Activated CD4-positive, alpha-beta memory T cell treated with anti-CD3 and anti-CD28 coated beads for 36 hours (primary cell): ENCODE measurements at regions of chr9 and their contacts with region 1.

Region 1: GRCh38 chr9:137223078-137223970 is 1.3 kb upstream of the RNF208 start:
- DNase-seq: peak; percentile 99
- H3K4me3 Mint-ChIP-seq: peak overlapping the region; percentile 73
- H3K27ac Mint-ChIP-seq: peak overlapping the region; percentile 58
- H3K4me1 Mint-ChIP-seq: peaks cover 5% of the 10 kb centered on the region
- H3K27me3 Mint-ChIP-seq: peaks cover 2% of the 10 kb centered on the region

Region 2: GRCh38 chr9:137095664-137096517 is 127.4 kb before region 1 on chr9:
- CTCF ChIA-PET with region 1: interaction called, 17 read pairs
- POLR2A ChIA-PET with region 1: interaction called, 6 read pairs
- intact Hi-C with region 1: no loop called
- DNase-seq: peak; percentile 93
- H3K4me3 Mint-ChIP-seq: peak overlapping the region; percentile 62
- H3K27ac Mint-ChIP-seq: peak overlapping the region; percentile 84
- H3K4me1 Mint-ChIP-seq: peaks cover 19% of the 10 kb centered on the region
- H3K27me3 Mint-ChIP-seq: no peaks in the 10 kb centered on the region

Region 3: GRCh38 chr9:137129456-137130175 is 93.7 kb before region 1 on chr9:
- CTCF ChIA-PET with region 1: interaction called, 6 read pairs
- POLR2A ChIA-PET with region 1: interaction called, 14 read pairs
- intact Hi-C with region 1: loop called (anchors 2 kb)
- DNase-seq: peak; percentile 94
- H3K4me3 Mint-ChIP-seq: peak overlapping the region; percentile 84
- H3K27ac Mint-ChIP-seq: peak overlapping the region; percentile 70
- H3K4me1 Mint-ChIP-seq: peaks cover 20% of the 10 kb centered on the region
- H3K27me3 Mint-ChIP-seq: peaks cover 2% of the 10 kb centered on the region

Region 4: DNA sequence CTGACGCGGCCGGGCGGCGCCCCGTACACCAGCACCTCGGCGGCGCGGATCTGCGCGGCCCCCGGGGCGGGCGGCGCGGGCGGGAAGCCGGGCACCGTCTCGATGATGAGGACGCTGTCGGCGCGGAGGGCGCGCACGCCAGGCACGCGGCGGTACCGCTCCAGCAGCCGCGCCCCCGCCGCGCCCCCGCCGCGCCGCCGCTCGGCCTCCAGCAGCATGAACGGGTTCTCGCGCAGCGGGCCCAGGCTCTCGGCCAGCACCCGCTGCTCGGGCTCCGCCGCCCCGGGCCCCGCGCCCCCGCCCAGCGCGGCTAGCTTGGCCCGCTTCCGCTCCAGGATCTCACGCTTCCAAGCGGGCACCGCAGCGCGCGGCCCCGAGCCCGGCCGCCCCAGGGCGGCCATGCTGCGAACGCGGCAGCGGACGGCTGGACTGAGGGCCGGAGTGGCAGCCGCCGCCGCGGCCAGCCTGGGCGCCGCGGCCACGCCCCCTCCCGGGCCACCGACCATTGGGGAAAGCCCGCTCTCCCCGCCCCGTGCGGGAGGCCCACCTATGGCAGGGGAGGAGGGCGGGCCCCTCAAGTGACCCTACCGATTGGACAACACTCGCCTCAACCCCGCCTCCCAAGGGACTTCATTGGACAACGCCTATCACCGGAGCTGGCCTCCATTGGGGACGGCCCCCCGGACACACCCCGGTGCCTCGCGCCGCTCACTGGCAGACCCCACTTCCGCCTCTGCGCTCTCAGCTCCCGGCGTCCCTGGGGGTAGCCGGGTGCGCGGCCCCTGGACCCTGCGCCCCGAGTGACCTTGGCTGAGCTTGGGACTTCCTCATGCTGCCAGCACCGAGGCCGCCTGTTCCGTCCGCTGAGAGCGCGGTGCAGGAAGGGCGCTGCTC is 22.8 kb before region 1 on chr9 and contains the start of gene TPRN:
- CTCF ChIA-PET with region 1: interaction called, 9 read pairs
- POLR2A ChIA-PET with region 1: interaction called, 6 read pairs
- intact Hi-C with region 1: loop called (anchors 1 kb)
- DNase-seq: peak; percentile 99
- H3K4me3 Mint-ChIP-seq: peak within 1 kb of the TSS; percentile 82
- H3K27ac Mint-ChIP-seq: peak within 1 kb of the TSS; percentile 67
- H3K4me1 Mint-ChIP-seq: peaks cover 26% of the 10 kb centered on the region
- H3K27me3 Mint-ChIP-seq: no peaks in the 10 kb centered on the region
- total RNA-seq, gene TPRN: 6.1 to 6.7 TPM